Activated T-helper 2 cell treated with anti-CD3 and anti-CD28 coated beads, Interferon-gamma antibody, Interleukin-2, Interleukin-4, amounts not matched to agents 10 μg/mL and 5 μg/mL and 100 μg/mL, durations not matched to agents 14 hours and 24 hours and 36 hours (primary cell): ENCODE measurements at regions of chr18 and their contacts with region 1.

Region 1: GRCh38 chr18:54224379-54225014 is at the start of gene MBD2:
- DNase-seq: peak; percentile 91
- H3K4me3 Mint-ChIP-seq: peak within 1 kb of the TSS; percentile 98
- H3K27ac Mint-ChIP-seq: peak within 1 kb of the TSS; percentile 95
- H3K4me1 Mint-ChIP-seq: peaks cover 44% of the 10 kb centered on the region
- H3K27me3 Mint-ChIP-seq: no peaks in the 10 kb centered on the region
- total RNA-seq, gene MBD2: 165 and 196 TPM in 2 replicates

Region 2: DNA sequence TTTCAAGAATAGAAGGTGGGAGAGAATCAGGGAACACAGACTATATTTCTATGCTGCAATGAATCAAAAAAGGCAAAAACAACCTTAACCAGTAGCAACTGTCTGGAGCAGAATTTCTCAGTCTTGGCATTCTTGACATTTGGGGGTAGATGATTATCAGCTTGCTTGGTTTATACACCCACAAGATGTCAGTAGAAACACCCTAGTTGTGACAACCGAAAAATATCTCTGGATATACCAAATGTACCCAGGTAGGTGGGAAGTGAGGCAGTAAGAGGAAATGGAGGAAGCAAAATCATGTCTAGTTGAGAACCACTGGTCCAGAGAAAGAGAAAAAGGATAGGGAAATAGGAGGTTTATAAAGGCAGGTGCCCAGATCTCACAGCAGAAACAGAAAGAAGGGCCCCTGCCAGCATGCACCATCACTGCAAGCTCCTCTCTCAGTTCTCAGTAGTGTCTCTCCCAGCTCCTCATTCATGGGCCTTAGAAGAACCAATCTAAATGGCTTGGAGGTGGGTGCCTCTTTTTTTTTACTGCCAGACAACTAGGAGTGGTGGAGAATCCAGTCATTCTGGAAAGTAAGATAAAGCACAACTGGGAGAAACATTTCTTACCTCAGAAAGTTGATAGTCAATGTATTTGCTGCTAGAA is 50.4 kb before region 1 on chr18:
- intact Hi-C with region 1: loop called (anchors 1 kb)
- DNase-seq: no peak
- H3K4me3 Mint-ChIP-seq: peak overlapping the region; percentile 41
- H3K27ac Mint-ChIP-seq: peak overlapping the region; percentile 94
- H3K4me1 Mint-ChIP-seq: peaks cover 61% of the 10 kb centered on the region
- H3K27me3 Mint-ChIP-seq: no peaks in the 10 kb centered on the region

Region 3: GRCh38 chr18:54181856-54182602 is 42.5 kb before region 1 on chr18:
- intact Hi-C with region 1: loop called (anchors 1 kb)
- DNase-seq: no peak
- H3K4me3 Mint-ChIP-seq: no peak overlapping the region
- H3K27ac Mint-ChIP-seq: no peak overlapping the region
- H3K4me1 Mint-ChIP-seq: peaks cover 11% of the 10 kb centered on the region
- H3K27me3 Mint-ChIP-seq: no peaks in the 10 kb centered on the region

Region 4: GRCh38 chr18:54209471-54210180 is 14.9 kb before region 1 on chr18:
- intact Hi-C with region 1: loop called (anchors 1 kb)
- DNase-seq: no peak
- H3K4me3 Mint-ChIP-seq: peak overlapping the region; percentile 53
- H3K27ac Mint-ChIP-seq: peak overlapping the region; percentile 84
- H3K4me1 Mint-ChIP-seq: peaks cover 59% of the 10 kb centered on the region
- H3K27me3 Mint-ChIP-seq: no peaks in the 10 kb centered on the region

Region 5: DNA sequence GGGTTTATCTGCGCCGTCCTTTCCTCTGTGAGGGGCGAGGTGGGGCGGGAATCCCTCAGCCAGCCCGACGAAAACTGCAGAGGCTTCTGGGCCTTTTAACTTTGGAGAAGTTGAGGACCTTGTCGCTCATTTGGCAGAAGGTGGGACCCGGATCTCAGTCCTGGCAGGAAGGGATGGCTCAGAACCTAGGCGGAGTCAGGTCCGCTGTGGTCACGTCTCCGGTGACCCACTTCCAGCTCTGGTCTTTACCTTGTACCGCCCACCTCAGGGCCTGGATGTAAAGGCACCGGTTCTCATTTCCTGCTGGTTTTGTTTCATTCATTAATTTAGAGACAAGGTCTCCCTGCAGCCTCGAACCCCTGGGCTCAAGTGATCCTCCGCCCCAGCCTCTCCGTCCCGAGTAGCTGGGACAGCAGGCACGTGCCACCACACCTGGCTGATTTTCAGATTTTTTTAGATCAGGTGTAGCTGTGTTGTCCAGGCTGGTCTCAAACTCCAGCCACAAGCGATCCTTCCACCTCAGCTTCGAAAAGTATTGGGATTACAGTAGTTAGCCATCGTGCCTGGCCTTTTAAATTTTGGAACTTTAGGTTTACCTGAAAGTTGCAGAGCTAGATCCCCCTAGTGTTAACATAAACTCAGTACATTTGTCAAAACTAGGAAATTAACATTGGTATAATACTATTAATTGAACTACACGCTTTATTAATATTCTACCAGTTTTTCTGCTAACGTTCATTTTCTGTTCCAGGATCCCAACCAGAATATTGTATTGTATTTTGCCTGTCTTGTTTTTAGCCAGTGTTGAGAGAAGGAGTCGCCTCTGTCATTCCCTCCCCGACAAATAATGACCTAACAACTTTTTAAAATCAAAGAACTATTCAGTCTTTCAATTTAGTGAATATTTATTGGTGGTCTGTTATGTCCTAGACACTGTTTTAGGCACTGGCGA is 45.7 kb after region 1 on chr18:
- intact Hi-C with region 1: loop called (anchors 1 kb)
- DNase-seq: no peak
- H3K4me3 Mint-ChIP-seq: peak overlapping the region; percentile 85
- H3K27ac Mint-ChIP-seq: peak overlapping the region; percentile 97
- H3K4me1 Mint-ChIP-seq: peaks cover 26% of the 10 kb centered on the region
- H3K27me3 Mint-ChIP-seq: no peaks in the 10 kb centered on the region

Region 6: GRCh38 chr18:54294274-54294673 is 69.8 kb after region 1 on chr18:
- intact Hi-C with region 1: no loop called
- DNase-seq: no peak
- H3K4me3 Mint-ChIP-seq: no peak overlapping the region
- H3K27ac Mint-ChIP-seq: no peak overlapping the region
- H3K4me1 Mint-ChIP-seq: no peaks in the 10 kb centered on the region
- H3K27me3 Mint-ChIP-seq: no peaks in the 10 kb centered on the region

Region 7: GRCh38 chr18:54357660-54358494 is 133.4 kb after region 1 on chr18 and contains the starts of genes C18orf54 and STARD6:
- intact Hi-C with region 1: loop called (anchors 1 kb)
- DNase-seq: peak; percentile 90
- H3K4me3 Mint-ChIP-seq: peak within 1 kb of the TSS; percentile 99
- H3K27ac Mint-ChIP-seq: peak within 1 kb of the TSS; percentile 97
- H3K4me1 Mint-ChIP-seq: peaks cover 21% of the 10 kb centered on the region
- H3K27me3 Mint-ChIP-seq: no peaks in the 10 kb centered on the region
- total RNA-seq, gene C18orf54: 10.4 and 10.9 TPM in 2 replicates
- total RNA-seq, gene STARD6: not detected in 2 replicates